Activated T-helper 1 cell treated with anti-CD3 and anti-CD28 coated beads, Interleukin-12 subunit alpha, Interleukin-12 subunit beta, Interleukin-2, Interleukin-4 antibody, amounts not matched to agents 30 ng/mL and 10 ng/mL and 1 ng/mL, durations not matched to agents 14 hours and 24 hours and 36 hours (primary cell): ENCODE measurements at regions of chr3 and their contacts with region 1.

Region 1: GRCh38 chr3:46976326-46977190 is at the start of gene CCDC12:
- DNase-seq: peak; percentile 93
- H3K4me3 Mint-ChIP-seq: peak within 1 kb of the TSS; percentile 97
- H3K27ac Mint-ChIP-seq: peak within 1 kb of the TSS; percentile 100
- H3K4me1 Mint-ChIP-seq: peaks cover 52% of the 10 kb centered on the region
- H3K27me3 Mint-ChIP-seq: no peaks in the 10 kb centered on the region
- total RNA-seq, gene CCDC12: 68.7 and 69.1 TPM in 2 replicates

Region 2: GRCh38 chr3:46860017-46860830 is 116.3 kb before region 1 on chr3:
- intact Hi-C with region 1: no loop called
- DNase-seq: no peak
- H3K4me3 Mint-ChIP-seq: no peak overlapping the region
- H3K27ac Mint-ChIP-seq: no peak overlapping the region
- H3K4me1 Mint-ChIP-seq: no peaks in the 10 kb centered on the region
- H3K27me3 Mint-ChIP-seq: peaks cover 13% of the 10 kb centered on the region

Region 3: DNA sequence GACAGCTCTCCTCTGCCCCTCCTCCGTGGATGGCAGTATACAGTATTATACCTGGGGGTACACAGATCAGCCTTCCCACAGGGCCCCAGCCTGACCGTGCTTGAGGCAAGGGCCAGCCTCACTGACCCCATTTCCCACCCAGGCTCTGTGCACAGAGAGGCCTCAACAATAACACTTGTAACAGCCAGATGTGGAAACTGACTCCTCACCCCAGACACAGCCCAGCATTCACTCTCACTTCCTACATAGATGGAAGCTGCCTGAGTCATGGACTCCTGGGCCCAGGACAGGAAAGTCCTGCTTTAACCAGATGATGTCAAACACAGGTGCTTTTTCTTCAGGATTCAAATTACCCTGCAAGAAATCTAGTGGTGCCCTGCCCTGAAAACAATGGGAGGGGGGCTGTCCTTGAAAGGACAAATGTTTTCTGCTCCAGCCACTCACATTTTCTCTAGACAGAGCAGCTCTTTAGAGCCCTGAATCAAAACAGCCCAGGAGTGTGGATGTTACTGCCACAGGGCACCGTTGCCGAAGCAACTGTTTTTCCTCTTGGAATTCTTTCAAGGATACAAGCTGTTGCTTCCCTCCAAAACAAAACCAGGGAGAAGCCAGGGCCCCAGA is 16.4 kb before region 1 on chr3:
- intact Hi-C with region 1: loop called (anchors 1 kb)
- DNase-seq: no peak
- H3K4me3 Mint-ChIP-seq: peak overlapping the region; percentile 15
- H3K27ac Mint-ChIP-seq: peak overlapping the region; percentile 83
- H3K4me1 Mint-ChIP-seq: peaks cover 61% of the 10 kb centered on the region
- H3K27me3 Mint-ChIP-seq: no peaks in the 10 kb centered on the region

Region 4: DNA sequence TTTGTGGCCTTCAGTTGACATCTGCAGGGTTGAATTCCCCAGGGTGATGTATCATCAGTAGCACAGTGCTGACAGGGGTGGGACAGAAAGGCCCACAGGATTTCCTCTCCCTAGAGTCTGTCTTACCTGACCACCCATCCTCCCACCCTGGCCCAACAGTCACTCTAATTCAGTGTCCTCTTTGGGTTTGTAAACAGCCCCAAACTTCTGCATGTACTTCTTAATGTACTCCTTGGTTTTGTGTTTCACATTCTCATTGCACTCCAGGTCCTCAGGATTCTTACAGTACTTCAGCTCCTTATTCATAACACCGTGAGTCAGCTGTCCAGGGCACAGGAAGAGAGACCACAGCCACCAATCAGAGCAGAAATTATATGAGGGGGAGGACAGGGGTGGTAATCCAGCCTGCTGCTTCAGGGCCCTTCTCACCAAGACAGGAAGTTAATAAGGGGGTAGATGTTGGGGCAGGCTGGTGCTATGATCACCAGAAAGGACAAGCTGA is 40.4 kb after region 1 on chr3:
- intact Hi-C with region 1: loop called (anchors 1 kb)
- DNase-seq: no peak
- H3K4me3 Mint-ChIP-seq: peak overlapping the region; percentile 59
- H3K27ac Mint-ChIP-seq: peak overlapping the region; percentile 87
- H3K4me1 Mint-ChIP-seq: peaks cover 57% of the 10 kb centered on the region
- H3K27me3 Mint-ChIP-seq: no peaks in the 10 kb centered on the region

Region 5: DNA sequence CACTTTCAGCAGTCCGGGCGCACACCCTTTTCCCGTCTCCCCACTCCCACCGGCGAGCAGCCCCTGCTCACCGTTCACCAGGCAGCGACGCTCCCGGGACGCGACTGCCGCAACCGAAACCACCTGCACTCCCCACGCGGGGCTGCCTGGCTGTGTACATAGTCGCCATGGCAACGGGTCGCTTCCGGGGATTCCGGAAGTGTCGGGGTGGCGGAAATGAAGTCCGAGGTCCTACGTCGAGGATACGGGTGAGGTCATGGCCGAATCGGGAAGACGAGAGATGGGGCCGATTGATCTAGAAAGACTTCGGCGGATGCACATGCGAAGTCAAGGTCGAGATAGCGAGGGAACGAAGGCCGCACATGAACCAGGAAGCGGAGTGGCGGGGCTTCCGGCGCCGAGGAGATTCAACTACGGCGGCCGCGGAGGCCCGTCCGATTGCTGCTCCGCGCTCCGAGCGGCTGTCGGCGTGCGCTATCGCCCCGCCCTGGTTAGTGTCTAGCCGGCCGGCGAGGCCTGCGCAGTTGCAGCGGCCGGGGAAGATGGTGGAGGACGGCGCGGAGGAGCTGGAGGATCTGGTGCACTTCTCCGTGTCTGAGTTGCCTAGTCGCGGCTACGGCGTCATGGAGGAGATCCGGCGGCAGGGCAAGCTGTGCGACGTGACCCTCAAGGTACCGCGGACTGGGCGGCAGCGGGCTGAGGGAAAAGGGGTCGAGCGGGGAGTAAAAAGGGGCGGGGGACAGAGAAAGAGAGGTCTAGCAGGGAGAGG is 306.1 kb after region 1 on chr3 and contains the starts of genes KIF9 and KLHL18:
- intact Hi-C with region 1: loop called (anchors 2 kb)
- DNase-seq: peak; percentile 95
- H3K4me3 Mint-ChIP-seq: peak within 1 kb of the TSS; percentile 98
- H3K27ac Mint-ChIP-seq: peak within 1 kb of the TSS; percentile 100
- H3K4me1 Mint-ChIP-seq: peaks cover 45% of the 10 kb centered on the region
- H3K27me3 Mint-ChIP-seq: no peaks in the 10 kb centered on the region
- total RNA-seq, gene KIF9: 3.3 and 3.4 TPM in 2 replicates
- total RNA-seq, gene KLHL18: 48.3 and 48.7 TPM in 2 replicates

Region 6: GRCh38 chr3:47781685-47782445 is 805.3 kb after region 1 on chr3 and contains the start of gene SMARCC1:
- intact Hi-C with region 1: loop called (anchors 10 kb)
- DNase-seq: peak; percentile 98
- H3K4me3 Mint-ChIP-seq: peak within 1 kb of the TSS; percentile 96
- H3K27ac Mint-ChIP-seq: peak within 1 kb of the TSS; percentile 98
- H3K4me1 Mint-ChIP-seq: peaks cover 28% of the 10 kb centered on the region
- H3K27me3 Mint-ChIP-seq: no peaks in the 10 kb centered on the region
- total RNA-seq, gene SMARCC1: 136 and 148 TPM in 2 replicates